MCF 10A (cell line): ENCODE measurements at regions of chr5 and their contacts with region 1.

Region 1: DNA sequence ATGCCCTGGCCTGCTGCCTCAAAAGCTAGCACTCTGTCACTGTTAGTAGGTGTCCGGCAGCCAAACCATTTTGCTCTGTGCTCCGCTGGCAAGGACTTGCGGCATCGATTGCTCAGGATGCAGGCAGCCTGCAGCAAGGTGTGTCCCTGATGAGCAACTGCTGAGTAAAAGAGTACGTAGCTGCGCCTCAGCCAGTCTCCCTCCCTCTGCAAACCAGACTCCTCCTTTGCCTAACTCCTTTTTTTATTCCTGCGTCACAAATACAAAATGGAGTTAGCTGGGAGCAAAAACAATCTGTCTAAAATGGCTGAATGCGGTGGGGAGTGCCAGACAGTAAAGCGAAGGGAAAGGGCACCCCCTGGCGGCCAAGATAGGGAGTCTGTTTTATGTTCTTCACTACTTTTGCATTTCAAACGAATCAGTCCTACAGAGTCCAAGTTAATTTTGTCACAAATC is 61.1 kb downstream of the DIAPH1 start:
- DNase-seq: peak; percentile 99
- H3K4me3 Mint-ChIP-seq: peak overlapping the region; percentile 70
- H3K27ac Mint-ChIP-seq: peak overlapping the region; percentile 98
- H3K4me1 Mint-ChIP-seq: peaks cover 49% of the 10 kb centered on the region
- H3K27me3 Mint-ChIP-seq: no peaks in the 10 kb centered on the region
- CTCF ChIP-seq: peak; percentile 93

Region 2: GRCh38 chr5:141094481-141095262 is 463.0 kb before region 1 on chr5 and contains the start of gene PCDHB2:
- CTCF ChIA-PET with region 1: no interaction called
- POLR2A ChIA-PET with region 1: no interaction called
- intact Hi-C with region 1: loop called (anchors 2 kb)
- DNase-seq: peak; percentile 70
- H3K4me3 Mint-ChIP-seq: peak within 1 kb of the TSS; percentile 74
- H3K27ac Mint-ChIP-seq: peak within 1 kb of the TSS; percentile 89
- H3K4me1 Mint-ChIP-seq: no peaks in the 10 kb centered on the region
- H3K27me3 Mint-ChIP-seq: no peaks in the 10 kb centered on the region
- CTCF ChIP-seq: peak; percentile 58
- total RNA-seq, gene PCDHB2: 2.4 and 2.6 TPM in 2 replicates

Region 3: GRCh38 chr5:141223112-141223783 is 334.5 kb before region 1 on chr5 and contains the start of gene PCDHB14:
- CTCF ChIA-PET with region 1: interaction called, 118 read pairs
- POLR2A ChIA-PET with region 1: interaction called, 91 read pairs
- intact Hi-C with region 1: loop called (anchors 1 kb)
- DNase-seq: peak; percentile 79
- H3K4me3 Mint-ChIP-seq: peak within 1 kb of the TSS; percentile 84
- H3K27ac Mint-ChIP-seq: peak within 1 kb of the TSS; percentile 60
- H3K4me1 Mint-ChIP-seq: no peaks in the 10 kb centered on the region
- H3K27me3 Mint-ChIP-seq: no peaks in the 10 kb centered on the region
- CTCF ChIP-seq: peak; percentile 69
- total RNA-seq, gene PCDHB14: 4.7 and 6.2 TPM in 2 replicates

Region 4: GRCh38 chr5:141402553-141403260 is 155.0 kb before region 1 on chr5 and contains the start of gene PCDHGA9:
- CTCF ChIA-PET with region 1: interaction called, 12 read pairs
- POLR2A ChIA-PET with region 1: interaction called, 6 read pairs
- intact Hi-C with region 1: no loop called
- DNase-seq: peak; percentile 43
- H3K4me3 Mint-ChIP-seq: no peak within 1 kb of the TSS
- H3K27ac Mint-ChIP-seq: no peak within 1 kb of the TSS
- H3K4me1 Mint-ChIP-seq: no peaks in the 10 kb centered on the region
- H3K27me3 Mint-ChIP-seq: no peaks in the 10 kb centered on the region
- CTCF ChIP-seq: no peak
- total RNA-seq, gene PCDHGA9: 0.89 and 1.3 TPM in 2 replicates

Region 5: DNA sequence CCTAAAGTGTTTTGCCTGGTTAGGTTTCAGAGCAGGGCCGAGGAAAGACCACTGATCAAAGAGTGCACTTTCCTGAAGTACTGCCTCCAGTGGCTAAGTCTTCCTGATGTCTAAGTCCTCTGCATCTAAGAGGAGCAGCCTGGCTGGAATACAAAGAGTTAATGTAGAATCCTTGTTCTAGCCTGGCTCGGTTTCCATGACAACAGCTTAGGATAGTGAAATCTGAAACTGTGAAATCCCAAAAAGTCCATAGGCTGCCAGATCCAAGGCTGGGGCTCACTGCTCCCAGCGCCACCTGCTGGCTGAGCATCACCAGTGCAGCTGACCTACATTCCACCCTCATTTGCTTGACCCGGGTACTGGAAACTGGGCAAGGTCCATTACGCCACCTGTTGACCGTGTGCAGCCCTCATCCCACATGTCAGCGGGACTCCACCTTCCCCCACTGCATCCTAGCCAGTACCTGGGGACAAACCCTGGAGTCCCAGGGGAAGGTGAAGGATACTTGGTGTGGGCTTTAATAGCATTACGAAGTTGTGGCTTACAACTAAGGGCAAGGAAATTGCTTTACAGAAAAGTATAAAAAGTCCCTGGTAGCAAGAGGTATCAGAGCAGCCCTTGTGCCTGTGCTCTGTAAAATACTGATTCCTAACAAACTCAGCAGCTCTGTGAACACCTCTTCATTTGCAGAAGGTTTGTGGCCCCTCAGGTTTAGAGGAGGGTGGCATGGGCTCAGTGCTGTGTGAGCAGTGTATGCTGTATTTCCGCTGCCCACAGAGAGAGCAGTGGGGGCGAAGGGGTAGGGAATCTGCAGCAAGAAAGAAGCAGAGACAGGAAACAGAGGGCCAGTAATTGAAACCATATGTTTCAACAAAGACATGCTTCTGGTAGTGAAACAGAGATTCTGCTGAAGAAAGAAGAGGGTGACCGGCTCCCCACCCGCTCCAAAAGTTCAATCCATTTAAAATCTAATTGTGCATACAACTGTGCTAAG is 32.8 kb before region 1 on chr5:
- CTCF ChIA-PET with region 1: interaction called, 191 read pairs
- POLR2A ChIA-PET with region 1: interaction called, 167 read pairs
- intact Hi-C with region 1: loop called (anchors 1 kb)
- DNase-seq: peak; percentile 97
- H3K4me3 Mint-ChIP-seq: no peak overlapping the region
- H3K27ac Mint-ChIP-seq: peak overlapping the region; percentile 60
- H3K4me1 Mint-ChIP-seq: peaks cover 45% of the 10 kb centered on the region
- H3K27me3 Mint-ChIP-seq: no peaks in the 10 kb centered on the region
- CTCF ChIP-seq: peak; percentile 100

Region 6: GRCh38 chr5:141636413-141637122 is 78.9 kb after region 1 on chr5 and contains the starts of genes HDAC3 and RELL2:
- CTCF ChIA-PET with region 1: interaction called, 6 read pairs
- POLR2A ChIA-PET with region 1: interaction called, 26 read pairs
- intact Hi-C with region 1: no loop called
- DNase-seq: peak; percentile 95
- H3K4me3 Mint-ChIP-seq: peak within 1 kb of the TSS; percentile 92
- H3K27ac Mint-ChIP-seq: peak within 1 kb of the TSS; percentile 47
- H3K4me1 Mint-ChIP-seq: peaks cover 42% of the 10 kb centered on the region
- H3K27me3 Mint-ChIP-seq: no peaks in the 10 kb centered on the region
- CTCF ChIP-seq: no peak
- total RNA-seq, gene HDAC3: 83.5 and 85.6 TPM in 2 replicates
- total RNA-seq, gene RELL2: 12.5 and 13.3 TPM in 2 replicates